ENCODE measurements at regions of chr9 and their contacts with region 1.

Region 1: DNA sequence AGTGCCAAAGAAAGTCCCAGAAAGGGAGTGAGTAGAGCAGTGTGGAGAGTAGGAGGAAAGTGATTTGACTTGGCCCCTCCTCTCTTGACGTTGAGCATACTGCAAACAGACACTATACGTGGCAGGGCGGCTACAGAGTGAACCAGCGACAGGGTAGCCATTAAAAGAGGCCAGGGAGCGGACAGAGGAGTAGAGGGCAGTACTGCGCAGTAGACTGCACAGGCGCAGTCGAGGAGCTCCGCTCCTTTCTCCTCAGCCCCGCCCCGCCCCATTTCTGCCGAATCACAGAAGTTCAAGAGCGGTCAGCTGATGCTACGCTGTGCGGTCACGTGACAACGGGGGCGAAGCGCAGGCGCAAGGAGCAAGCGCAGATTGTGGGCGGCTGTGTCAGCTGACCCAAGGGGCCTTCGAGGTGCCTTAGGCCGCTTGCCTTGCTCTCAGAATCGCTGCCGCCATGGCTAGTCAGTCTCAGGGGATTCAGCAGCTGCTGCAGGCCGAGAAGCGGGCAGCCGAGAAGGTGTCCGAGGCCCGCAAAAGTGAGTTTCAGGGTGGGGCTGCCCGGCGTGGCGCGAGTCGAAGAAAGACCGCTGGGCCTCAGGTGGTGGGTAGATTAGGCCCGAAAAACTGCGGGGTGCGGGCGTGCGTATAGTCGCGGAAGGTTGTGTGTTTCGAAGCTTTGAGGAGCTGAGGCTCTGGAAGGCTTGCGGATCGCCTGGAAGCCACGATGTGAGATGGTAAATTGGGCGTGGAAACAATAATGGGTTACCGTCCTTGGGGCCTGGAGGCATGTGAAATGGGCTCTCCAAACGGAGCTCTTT is at the start of gene ATP6V1G1:
- DNase-seq: peak; percentile 99 to 100
- H3K4me3 ChIP-seq: peak within 1 kb of the TSS; percentile 96
- H3K4me3 Mint-ChIP-seq: peak within 1 kb of the TSS; percentile 93
- H3K27ac Mint-ChIP-seq: peak within 1 kb of the TSS; percentile 97
- H3K4me1 ChIP-seq: peaks cover 17% of the 10 kb centered on the region
- H3K4me1 Mint-ChIP-seq: peaks cover 33% of the 10 kb centered on the region
- H3K27me3 ChIP-seq: no peaks in the 10 kb centered on the region
- H3K27me3 Mint-ChIP-seq: no peaks in the 10 kb centered on the region
- CTCF ChIP-seq: no peak
- total RNA-seq, gene ATP6V1G1: 143 and 147 TPM in 2 replicates

Region 2: DNA sequence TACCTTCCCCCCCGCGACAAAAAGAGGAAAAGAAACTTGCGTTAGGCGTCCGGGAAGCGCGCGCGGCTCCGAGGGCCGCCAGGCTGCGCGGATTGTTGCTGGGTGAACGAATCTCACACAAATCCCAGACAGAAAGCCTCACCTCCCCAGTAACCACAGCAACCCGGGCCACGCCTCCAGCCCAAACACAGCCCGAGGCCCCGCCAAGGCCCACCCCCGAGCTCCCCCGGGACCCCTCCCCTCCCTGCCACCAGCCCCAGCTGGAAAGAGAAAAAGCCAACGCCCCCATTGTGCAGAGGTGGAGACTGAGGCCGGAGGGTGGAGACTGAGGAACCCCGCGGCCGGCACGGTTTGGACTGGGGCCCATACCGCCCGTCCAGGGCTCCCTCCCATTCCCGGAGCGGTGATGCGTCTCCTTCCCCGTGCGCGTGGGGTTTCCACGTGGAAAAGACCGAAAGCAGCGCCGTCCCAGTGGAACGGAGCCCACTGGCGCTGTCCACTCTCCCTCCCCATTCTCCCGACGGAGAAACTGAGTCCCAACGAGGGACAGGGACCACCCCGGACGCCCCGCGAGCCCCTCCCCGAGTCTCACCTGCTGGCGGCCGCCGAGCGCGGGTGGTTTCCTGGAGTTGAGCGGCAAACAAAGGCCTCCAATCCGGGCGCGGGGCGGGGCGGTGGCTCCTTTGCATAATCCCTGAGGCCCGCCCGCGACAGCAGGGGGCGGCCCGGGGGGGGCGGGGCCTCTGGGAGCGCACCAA is 189.6 kb before region 1 on chr9:
- CTCF ChIA-PET with region 1: no interaction called
- POLR2A ChIA-PET with region 1: interaction called, 7 read pairs
- intact Hi-C with region 1: loop called (anchors 5 kb)
- DNase-seq: peak; percentile 96 to 98
- H3K4me3 ChIP-seq: peak overlapping the region; percentile 89
- H3K4me3 Mint-ChIP-seq: peak overlapping the region; percentile 91
- H3K27ac Mint-ChIP-seq: peak overlapping the region; percentile 99
- H3K4me1 ChIP-seq: peaks cover 15% of the 10 kb centered on the region
- H3K4me1 Mint-ChIP-seq: peaks cover 12% of the 10 kb centered on the region
- H3K27me3 ChIP-seq: no peaks in the 10 kb centered on the region
- H3K27me3 Mint-ChIP-seq: no peaks in the 10 kb centered on the region
- CTCF ChIP-seq: no peak

Region 3: GRCh38 chr9:114417511-114417910 is 170.1 kb before region 1 on chr9:
- CTCF ChIA-PET with region 1: no interaction called
- POLR2A ChIA-PET with region 1: no interaction called
- intact Hi-C with region 1: no loop called
- DNase-seq: no peak
- H3K4me3 ChIP-seq: no peak overlapping the region
- H3K4me3 Mint-ChIP-seq: no peak overlapping the region
- H3K27ac Mint-ChIP-seq: no peak overlapping the region
- H3K4me1 ChIP-seq: no peaks in the 10 kb centered on the region
- H3K4me1 Mint-ChIP-seq: no peaks in the 10 kb centered on the region
- H3K27me3 ChIP-seq: no peaks in the 10 kb centered on the region
- H3K27me3 Mint-ChIP-seq: no peaks in the 10 kb centered on the region
- CTCF ChIP-seq: no peak

Region 4: DNA sequence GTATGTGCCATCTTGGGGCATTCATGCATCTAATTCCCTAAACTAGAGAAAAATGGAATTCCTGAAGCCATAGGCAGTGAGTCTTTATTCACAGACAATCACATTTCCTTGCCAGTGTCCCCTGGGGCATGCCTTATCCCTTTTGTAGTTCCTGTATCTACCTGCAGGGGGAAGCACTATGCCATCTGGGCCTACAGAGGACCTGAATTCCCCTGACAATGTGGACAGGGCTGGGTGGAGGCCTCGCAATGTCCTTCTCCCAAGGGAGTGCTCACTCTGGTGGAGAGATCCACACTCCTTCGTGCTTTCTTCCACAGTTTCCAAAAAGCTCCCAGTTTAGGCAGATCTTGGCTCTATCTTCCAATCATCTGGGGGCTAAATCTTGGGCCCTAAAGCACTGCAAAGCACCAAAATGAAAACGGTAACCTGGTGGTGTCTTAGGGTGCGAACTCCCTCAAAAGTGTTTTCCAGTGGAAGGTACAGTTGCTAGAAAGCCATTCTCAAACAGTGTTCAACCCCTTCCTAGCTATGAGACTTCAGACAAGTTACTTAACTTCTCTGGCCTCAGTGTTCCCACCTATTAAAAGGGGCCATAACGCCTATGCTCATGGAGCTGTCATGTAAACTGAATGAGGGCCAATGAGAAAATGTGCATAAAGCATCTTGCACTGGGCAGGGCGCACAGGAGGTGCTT is 99.8 kb before region 1 on chr9:
- CTCF ChIA-PET with region 1: no interaction called
- POLR2A ChIA-PET with region 1: no interaction called
- intact Hi-C with region 1: loop called (anchors 1 kb)
- DNase-seq: peak; percentile 74 to 84
- H3K4me3 ChIP-seq: no peak overlapping the region
- H3K4me3 Mint-ChIP-seq: no peak overlapping the region
- H3K27ac Mint-ChIP-seq: no peak overlapping the region
- H3K4me1 ChIP-seq: no peaks in the 10 kb centered on the region
- H3K4me1 Mint-ChIP-seq: no peaks in the 10 kb centered on the region
- H3K27me3 ChIP-seq: no peaks in the 10 kb centered on the region
- H3K27me3 Mint-ChIP-seq: no peaks in the 10 kb centered on the region
- CTCF ChIP-seq: peak; percentile 79 to 86

Region 5: DNA sequence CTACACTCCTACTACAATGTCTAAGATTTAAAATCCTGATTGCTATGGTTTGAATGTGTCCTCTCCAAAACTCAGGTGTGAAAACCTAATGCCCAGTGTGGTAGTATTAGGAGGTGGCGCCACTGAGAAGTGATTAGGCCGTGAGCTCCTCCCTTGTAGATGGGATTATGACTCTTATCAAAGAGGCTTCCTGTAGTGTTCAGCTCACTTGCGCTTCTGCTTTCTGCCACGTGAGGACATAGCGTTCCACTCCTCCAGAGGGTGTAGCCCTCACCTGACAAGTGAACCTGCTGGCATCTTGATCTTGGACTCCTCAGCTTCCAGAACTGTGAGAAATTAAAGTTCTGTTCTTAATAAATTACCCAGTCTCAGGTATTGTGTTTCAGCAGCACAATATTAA is 49.4 kb before region 1 on chr9:
- CTCF ChIA-PET with region 1: interaction called, 10 read pairs
- POLR2A ChIA-PET with region 1: interaction called, 6 read pairs
- intact Hi-C with region 1: loop called (anchors 1 kb)
- DNase-seq: peak; percentile 68 to 74
- H3K4me3 ChIP-seq: no peak overlapping the region
- H3K4me3 Mint-ChIP-seq: no peak overlapping the region
- H3K27ac Mint-ChIP-seq: no peak overlapping the region
- H3K4me1 ChIP-seq: no peaks in the 10 kb centered on the region
- H3K4me1 Mint-ChIP-seq: no peaks in the 10 kb centered on the region
- H3K27me3 ChIP-seq: no peaks in the 10 kb centered on the region
- H3K27me3 Mint-ChIP-seq: peaks cover 7% of the 10 kb centered on the region
- CTCF ChIP-seq: peak; percentile 34 to 69

Region 6: GRCh38 chr9:114559830-114560513 is 27.6 kb before region 1 on chr9:
- CTCF ChIA-PET with region 1: interaction called, 6 read pairs
- POLR2A ChIA-PET with region 1: interaction called, 9 read pairs
- intact Hi-C with region 1: loop called (anchors 1 kb)
- DNase-seq: no peak
- H3K4me3 ChIP-seq: no peak overlapping the region
- H3K4me3 Mint-ChIP-seq: no peak overlapping the region
- H3K27ac Mint-ChIP-seq: no peak overlapping the region
- H3K4me1 ChIP-seq: peaks cover 21% of the 10 kb centered on the region
- H3K4me1 Mint-ChIP-seq: peaks cover 14% of the 10 kb centered on the region
- H3K27me3 ChIP-seq: no peaks in the 10 kb centered on the region
- H3K27me3 Mint-ChIP-seq: no peaks in the 10 kb centered on the region
- CTCF ChIP-seq: no peak

Region 7: DNA sequence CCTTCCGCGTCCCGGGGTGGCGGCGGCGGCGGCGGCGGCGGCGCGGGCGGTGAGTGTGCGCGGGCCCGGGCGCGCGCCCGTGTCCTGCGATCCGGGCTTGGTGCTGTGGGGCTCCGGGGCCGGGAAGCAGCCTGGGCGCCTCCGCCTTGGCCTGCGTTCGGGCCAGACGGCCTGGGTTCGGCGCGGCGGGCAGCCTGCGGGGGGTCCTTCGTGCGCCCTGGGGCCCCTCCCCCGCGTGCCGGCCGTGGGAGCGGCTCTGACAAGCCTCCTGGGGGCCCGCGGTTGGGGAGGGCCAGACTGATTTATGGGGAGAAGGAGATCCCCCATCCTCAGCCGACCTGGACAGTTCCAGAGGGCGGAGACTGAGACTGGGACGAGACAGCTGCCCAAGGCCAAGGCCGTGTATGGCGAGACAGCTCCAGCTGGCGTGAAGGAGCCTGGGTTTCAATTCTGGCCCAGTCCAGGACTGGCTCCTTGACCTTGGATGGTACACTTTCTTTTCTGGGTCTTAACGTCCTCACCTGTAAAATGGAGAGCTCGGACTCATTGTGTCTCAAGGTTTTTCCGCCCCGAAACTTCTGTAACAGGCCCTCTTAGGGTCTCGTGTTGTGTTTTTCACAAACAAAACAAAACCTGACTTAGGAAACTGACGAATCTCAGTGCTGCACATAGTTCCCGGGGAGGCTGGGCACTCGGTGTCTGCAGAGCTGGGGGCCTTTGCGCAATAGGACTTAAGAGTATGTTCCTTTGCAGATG is 24.1 kb after region 1 on chr9:
- CTCF ChIA-PET with region 1: interaction called, 3 read pairs
- POLR2A ChIA-PET with region 1: interaction called, 25 read pairs
- intact Hi-C with region 1: loop called (anchors 2 kb)
- DNase-seq: peak; percentile 70 to 71
- H3K4me3 ChIP-seq: peak overlapping the region; percentile 39
- H3K4me3 Mint-ChIP-seq: peak overlapping the region; percentile 75
- H3K27ac Mint-ChIP-seq: peak overlapping the region; percentile 82
- H3K4me1 ChIP-seq: 0 out of 2 replicates have a peak, but pooled peaks cover 10% of the 10 kb centered on the region
- H3K4me1 Mint-ChIP-seq: peaks cover 13% of the 10 kb centered on the region
- H3K27me3 ChIP-seq: no peaks in the 10 kb centered on the region
- H3K27me3 Mint-ChIP-seq: no peaks in the 10 kb centered on the region
- CTCF ChIP-seq: no peak

Region 8: DNA sequence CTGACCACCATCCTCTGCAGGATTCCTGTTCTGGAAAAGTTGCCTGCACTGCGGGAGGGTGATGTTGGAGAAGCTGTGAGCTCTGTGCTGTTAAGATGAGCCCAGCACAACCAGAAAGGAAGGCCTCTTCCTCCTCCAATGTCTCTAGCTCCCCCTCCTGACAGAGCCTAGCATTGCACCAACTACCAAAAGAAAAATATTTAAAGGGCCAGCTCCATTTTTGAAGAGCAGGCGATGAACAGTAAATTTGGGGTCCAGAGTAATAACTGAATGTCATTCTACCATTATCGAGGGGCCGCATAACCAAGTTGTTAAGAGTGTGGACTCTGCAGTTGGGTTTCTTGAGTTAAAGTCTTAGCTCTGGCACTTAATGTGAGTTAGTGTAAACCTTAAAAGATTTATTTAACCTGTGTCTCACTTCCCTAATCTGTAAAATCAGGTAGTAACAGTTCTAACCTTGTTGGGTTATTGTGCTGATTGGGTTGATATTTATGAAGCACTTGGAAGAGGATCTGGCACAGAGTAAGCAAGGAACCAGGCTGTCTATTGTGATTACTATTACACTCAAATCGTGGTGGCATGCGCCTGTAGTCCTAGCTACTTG is 66.1 kb after region 1 on chr9:
- CTCF ChIA-PET with region 1: interaction called, 13 read pairs
- POLR2A ChIA-PET with region 1: no interaction called
- intact Hi-C with region 1: loop called (anchors 2 kb)
- DNase-seq: peak; percentile 72 to 85
- H3K4me3 ChIP-seq: no peak overlapping the region
- H3K4me3 Mint-ChIP-seq: no peak overlapping the region
- H3K27ac Mint-ChIP-seq: no peak overlapping the region
- H3K4me1 ChIP-seq: no peaks in the 10 kb centered on the region
- H3K4me1 Mint-ChIP-seq: no peaks in the 10 kb centered on the region
- H3K27me3 ChIP-seq: no peaks in the 10 kb centered on the region
- H3K27me3 Mint-ChIP-seq: no peaks in the 10 kb centered on the region
- CTCF ChIP-seq: peak; percentile 88 to 92

Measured in Caco-2 (cell line).